ENCODE measurements at regions of chr1 and their contacts with region 1.

Region 1: GRCh38 chr1:7752512-7753417 is 18.3 kb upstream of the VAMP3 start:
- DNase-seq: peak; percentile 50
- H3K4me3 Mint-ChIP-seq: peak overlapping the region; percentile 47
- H3K27ac Mint-ChIP-seq: no peak overlapping the region
- H3K4me1 Mint-ChIP-seq: peaks cover 9% of the 10 kb centered on the region
- H3K27me3 Mint-ChIP-seq: peaks cover 13% of the 10 kb centered on the region

Region 2: GRCh38 chr1:7667625-7668218 is 85.0 kb before region 1 on chr1:
- CTCF ChIA-PET with region 1: interaction called, 506 read pairs
- POLR2A ChIA-PET with region 1: interaction called, 3 read pairs
- intact Hi-C with region 1: loop called (anchors 1 kb)
- DNase-seq: peak; percentile 87
- H3K4me3 Mint-ChIP-seq: no peak overlapping the region
- H3K27ac Mint-ChIP-seq: no peak overlapping the region
- H3K4me1 Mint-ChIP-seq: no peaks in the 10 kb centered on the region
- H3K27me3 Mint-ChIP-seq: peaks cover 5% of the 10 kb centered on the region

Region 3: GRCh38 chr1:7680207-7680954 is 72.4 kb before region 1 on chr1:
- CTCF ChIA-PET with region 1: interaction called, 52 read pairs
- POLR2A ChIA-PET with region 1: no interaction called
- intact Hi-C with region 1: no loop called
- DNase-seq: peak; percentile 35
- H3K4me3 Mint-ChIP-seq: peak overlapping the region; percentile 68
- H3K27ac Mint-ChIP-seq: no peak overlapping the region
- H3K4me1 Mint-ChIP-seq: no peaks in the 10 kb centered on the region
- H3K27me3 Mint-ChIP-seq: peaks cover 3% of the 10 kb centered on the region

Region 4: GRCh38 chr1:7704214-7705047 is 48.3 kb before region 1 on chr1:
- CTCF ChIA-PET with region 1: interaction called, 11 read pairs
- POLR2A ChIA-PET with region 1: no interaction called
- intact Hi-C with region 1: no loop called
- DNase-seq: peak; percentile 94
- H3K4me3 Mint-ChIP-seq: peak overlapping the region; percentile 56
- H3K27ac Mint-ChIP-seq: no peak overlapping the region
- H3K4me1 Mint-ChIP-seq: peaks cover 9% of the 10 kb centered on the region
- H3K27me3 Mint-ChIP-seq: peaks cover 37% of the 10 kb centered on the region

Region 5: DNA sequence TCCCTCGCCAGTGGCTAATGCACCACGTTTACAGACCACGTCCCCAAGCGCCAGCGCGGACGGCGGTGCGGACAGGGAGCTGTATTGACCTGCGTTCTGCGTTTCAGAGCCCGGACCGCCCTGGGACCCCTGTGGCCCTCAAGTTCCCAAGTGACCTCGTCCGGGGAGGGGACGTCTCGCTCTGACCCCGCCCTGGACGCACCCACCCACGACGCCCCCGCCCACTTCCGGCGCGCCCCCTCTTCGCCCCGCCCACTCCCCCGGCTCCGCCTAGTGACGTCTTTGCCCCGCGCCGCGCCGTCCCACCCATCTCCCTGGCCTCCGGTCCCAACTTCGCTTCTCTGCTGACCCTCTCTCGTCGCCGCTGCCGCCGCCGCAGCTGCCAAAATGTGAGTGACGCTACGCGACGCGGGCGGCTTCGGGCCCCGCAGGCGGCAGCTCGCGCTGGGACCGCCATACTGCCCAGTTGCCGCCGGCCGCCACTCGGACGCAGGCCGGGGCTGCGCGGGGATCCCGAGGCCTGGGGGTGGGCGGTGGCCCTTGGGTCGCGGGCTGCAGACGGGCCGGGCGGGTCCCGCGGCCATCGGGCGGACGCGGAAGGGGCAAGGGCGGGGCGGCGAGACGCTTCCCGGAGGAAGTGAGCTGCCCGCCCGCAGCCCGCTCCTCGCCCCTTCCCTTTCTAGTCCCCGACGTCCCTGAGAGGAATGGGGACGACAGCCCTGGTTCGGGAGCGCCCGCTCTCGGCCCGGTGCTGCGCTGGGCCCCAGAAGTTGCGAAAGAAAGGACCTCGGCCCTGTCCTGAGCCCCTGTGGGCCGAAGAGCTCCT is 18.4 kb after region 1 on chr1 and contains the start of gene VAMP3:
- CTCF ChIA-PET with region 1: interaction called, 40 read pairs
- POLR2A ChIA-PET with region 1: no interaction called
- intact Hi-C with region 1: no loop called
- DNase-seq: peak; percentile 92
- H3K4me3 Mint-ChIP-seq: peak within 1 kb of the TSS; percentile 82
- H3K27ac Mint-ChIP-seq: peak within 1 kb of the TSS; percentile 67
- H3K4me1 Mint-ChIP-seq: peaks cover 41% of the 10 kb centered on the region
- H3K27me3 Mint-ChIP-seq: peaks cover 5% of the 10 kb centered on the region
- total RNA-seq, gene VAMP3: 19.9 to 21.8 TPM

Measured in activated CD4-positive, alpha-beta memory T cell treated with anti-CD3 and anti-CD28 coated beads for 36 hours (primary cell).